ENCODE measurements at regions of chr12 and their contacts with region 1.

Region 1: GRCh38 chr12:1117970-1118563 is 127.0 kb downstream of the ERC1 start:
- DNase-seq: peak; percentile 77
- H3K4me3 Mint-ChIP-seq: no peak overlapping the region
- H3K27ac Mint-ChIP-seq: no peak overlapping the region
- H3K4me1 Mint-ChIP-seq: peaks cover 12% of the 10 kb centered on the region
- H3K27me3 Mint-ChIP-seq: no peaks in the 10 kb centered on the region
- CTCF ChIP-seq: peak; percentile 86

Region 2: DNA sequence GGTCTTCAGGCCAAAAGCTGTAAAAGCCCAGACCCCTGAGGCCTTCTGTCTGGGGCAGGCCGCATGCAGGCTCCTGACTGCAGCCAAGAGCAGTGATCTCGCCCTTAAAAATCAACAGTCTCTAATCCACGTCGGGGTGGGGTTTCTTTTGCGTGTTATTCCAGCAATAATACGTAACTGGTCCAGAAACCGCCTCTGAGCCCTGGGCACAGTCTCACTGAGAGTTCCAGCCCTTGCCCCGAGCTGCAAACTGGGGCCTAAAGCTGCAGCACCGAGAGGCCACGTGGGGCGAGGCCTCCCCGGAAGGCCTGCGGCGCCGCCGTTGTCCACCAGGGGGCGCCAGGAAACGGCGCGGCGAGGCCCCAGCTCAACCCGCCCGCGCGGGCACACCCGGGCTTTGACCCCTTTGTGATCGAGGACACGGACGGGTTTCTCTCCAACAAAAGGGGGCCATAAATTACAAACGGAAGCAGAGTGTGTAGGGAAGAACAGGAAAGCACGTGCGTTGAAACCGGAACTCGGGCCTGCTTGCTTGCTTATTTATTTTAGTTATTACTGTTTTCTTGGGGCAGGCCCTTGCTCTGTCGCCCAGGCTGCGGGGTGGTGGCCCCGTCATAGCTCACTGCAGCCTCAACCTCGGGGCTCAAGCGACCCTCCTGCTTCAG is 542.0 kb before region 1 on chr12:
- CTCF ChIA-PET with region 1: interaction called, 4 read pairs
- POLR2A ChIA-PET with region 1: interaction called, 10 read pairs
- intact Hi-C with region 1: loop called (anchors 10 kb)
- DNase-seq: peak; percentile 78
- H3K4me3 Mint-ChIP-seq: peak overlapping the region; percentile 35
- H3K27ac Mint-ChIP-seq: peak overlapping the region; percentile 91
- H3K4me1 Mint-ChIP-seq: peaks cover 44% of the 10 kb centered on the region
- H3K27me3 Mint-ChIP-seq: no peaks in the 10 kb centered on the region
- CTCF ChIP-seq: peak; percentile 99

Region 3: GRCh38 chr12:1083889-1084262 is 34.2 kb before region 1 on chr12:
- CTCF ChIA-PET with region 1: no interaction called
- POLR2A ChIA-PET with region 1: no interaction called
- intact Hi-C with region 1: no loop called
- DNase-seq: no peak
- H3K4me3 Mint-ChIP-seq: no peak overlapping the region
- H3K27ac Mint-ChIP-seq: no peak overlapping the region
- H3K4me1 Mint-ChIP-seq: no peaks in the 10 kb centered on the region
- H3K27me3 Mint-ChIP-seq: no peaks in the 10 kb centered on the region
- CTCF ChIP-seq: no peak

Region 4: DNA sequence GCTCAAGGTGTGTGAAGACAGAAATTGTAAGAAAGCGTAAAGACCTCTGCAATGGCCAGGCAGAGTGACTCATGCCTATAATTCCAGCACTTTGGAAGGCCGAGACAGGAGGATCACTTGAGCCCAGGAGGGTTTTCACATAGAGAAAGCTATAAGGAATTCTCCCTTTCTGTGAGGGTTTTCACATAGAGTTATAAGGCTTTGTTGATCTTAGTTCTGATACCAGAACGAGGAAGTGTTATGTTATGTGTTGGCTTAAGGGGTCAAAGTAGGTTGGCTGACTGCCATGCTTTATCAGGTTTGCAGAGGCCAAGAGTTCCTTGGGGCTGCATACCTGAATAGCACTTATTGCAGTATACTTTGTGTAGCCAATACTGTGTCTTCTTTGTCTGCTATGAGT is 12.1 kb after region 1 on chr12:
- CTCF ChIA-PET with region 1: interaction called, 39 read pairs
- POLR2A ChIA-PET with region 1: interaction called, 5 read pairs
- intact Hi-C with region 1: no loop called
- DNase-seq: peak; percentile 41
- H3K4me3 Mint-ChIP-seq: no peak overlapping the region
- H3K27ac Mint-ChIP-seq: no peak overlapping the region
- H3K4me1 Mint-ChIP-seq: peaks cover 9% of the 10 kb centered on the region
- H3K27me3 Mint-ChIP-seq: no peaks in the 10 kb centered on the region
- CTCF ChIP-seq: no peak

Region 5: GRCh38 chr12:1474041-1474573 is 356.0 kb after region 1 on chr12:
- CTCF ChIA-PET with region 1: interaction called, 12 read pairs
- POLR2A ChIA-PET with region 1: interaction called, 10 read pairs
- intact Hi-C with region 1: no loop called
- DNase-seq: peak; percentile 86
- H3K4me3 Mint-ChIP-seq: no peak overlapping the region
- H3K27ac Mint-ChIP-seq: no peak overlapping the region
- H3K4me1 Mint-ChIP-seq: peaks cover 7% of the 10 kb centered on the region
- H3K27me3 Mint-ChIP-seq: no peaks in the 10 kb centered on the region
- CTCF ChIP-seq: no peak

Region 6: GRCh38 chr12:1575408-1576401 is 457.6 kb after region 1 on chr12:
- CTCF ChIA-PET with region 1: interaction called, 143 read pairs
- POLR2A ChIA-PET with region 1: no interaction called
- intact Hi-C with region 1: no loop called
- DNase-seq: no peak
- H3K4me3 Mint-ChIP-seq: no peak overlapping the region
- H3K27ac Mint-ChIP-seq: no peak overlapping the region
- H3K4me1 Mint-ChIP-seq: no peaks in the 10 kb centered on the region
- H3K27me3 Mint-ChIP-seq: no peaks in the 10 kb centered on the region
- CTCF ChIP-seq: no peak

Region 7: DNA sequence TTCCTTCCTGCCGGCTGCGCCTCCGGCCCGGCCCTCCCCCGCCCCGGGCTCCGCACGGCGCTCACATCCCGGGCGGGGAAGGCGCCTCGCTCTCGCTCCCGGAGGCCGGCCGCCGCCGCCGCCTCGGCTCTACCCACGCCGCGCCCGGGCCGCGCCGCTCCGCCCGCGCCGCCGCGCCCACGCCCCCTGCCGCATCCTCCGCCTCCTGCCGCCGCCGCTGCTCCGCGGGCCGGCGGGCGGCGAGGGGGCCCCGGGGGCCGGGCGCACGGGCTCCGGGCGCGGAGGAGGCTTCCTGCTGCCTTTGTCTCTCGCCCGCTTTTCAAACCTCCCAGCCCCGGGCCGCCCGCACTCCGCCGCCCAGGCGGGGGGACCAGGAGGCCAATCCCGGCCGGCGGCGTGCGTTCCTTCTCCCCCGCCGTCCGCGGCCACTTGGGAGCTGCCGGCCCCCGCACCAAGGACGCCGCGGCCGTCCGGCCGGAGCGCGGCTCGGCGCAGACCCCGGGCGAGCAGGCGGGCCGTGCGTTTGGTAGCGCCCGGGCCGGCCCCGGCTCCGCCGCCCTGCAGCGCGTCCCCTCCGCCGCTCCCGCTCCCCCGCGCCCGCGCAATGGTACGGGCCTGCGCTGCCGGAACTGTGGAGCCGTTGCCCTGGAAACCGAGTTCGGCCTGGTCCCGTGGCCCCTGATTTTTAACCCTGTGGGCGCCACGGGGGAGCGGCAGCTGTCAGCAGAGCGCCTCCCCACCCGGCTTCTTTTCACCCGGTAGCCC is 476.4 kb after region 1 on chr12 and contains the start of gene FBXL14:
- CTCF ChIA-PET with region 1: interaction called, 66 read pairs
- POLR2A ChIA-PET with region 1: interaction called, 39 read pairs
- intact Hi-C with region 1: no loop called
- DNase-seq: peak; percentile 70
- H3K4me3 Mint-ChIP-seq: peak within 1 kb of the TSS; percentile 81
- H3K27ac Mint-ChIP-seq: peak within 1 kb of the TSS; percentile 76
- H3K4me1 Mint-ChIP-seq: peaks cover 36% of the 10 kb centered on the region
- H3K27me3 Mint-ChIP-seq: no peaks in the 10 kb centered on the region
- CTCF ChIP-seq: no peak
- total RNA-seq, gene FBXL14: 9.4 and 10.1 TPM in 2 replicates